ENCODE measurements at regions of chr12 and their contacts with region 1.

Region 1: GRCh38 chr12:57462251-57462911 is 2.8 kb downstream of the GLI1 start:
- DNase-seq: peak; percentile 78 to 93 (median 89)
- ATAC-seq: peak; percentile 64
- H3K4me3 ChIP-seq: peak overlapping the region; percentile 52 to 55
- H3K4me3 Mint-ChIP-seq: peak overlapping the region; percentile 92
- H3K27ac ChIP-seq: no peak overlapping the region
- H3K27ac Mint-ChIP-seq: peak overlapping the region; percentile 81
- H3K4me1 ChIP-seq: peaks cover 20% of the 10 kb centered on the region
- H3K4me1 Mint-ChIP-seq: peaks cover 34% of the 10 kb centered on the region
- H3K27me3 ChIP-seq: peaks cover 0 to 4% of the 10 kb centered on the region in 2 experiments
- H3K27me3 Mint-ChIP-seq: peaks cover 3% of the 10 kb centered on the region
- CTCF ChIP-seq: peak; percentile 92

Region 2: GRCh38 chr12:56243731-56244181 is 1218.6 kb before region 1 on chr12:
- CTCF ChIA-PET with region 1: no interaction called
- POLR2A ChIA-PET with region 1: no interaction called
- intact Hi-C with region 1: no loop called
- DNase-seq: no peak
- ATAC-seq: no peak
- H3K4me3 ChIP-seq: no peak overlapping the region
- H3K4me3 Mint-ChIP-seq: no peak overlapping the region
- H3K27ac ChIP-seq: no peak overlapping the region
- H3K27ac Mint-ChIP-seq: no peak overlapping the region
- H3K4me1 ChIP-seq: no peaks in the 10 kb centered on the region
- H3K4me1 Mint-ChIP-seq: no peaks in the 10 kb centered on the region
- H3K27me3 ChIP-seq: no peaks in the 10 kb centered on the region
- H3K27me3 Mint-ChIP-seq: no peaks in the 10 kb centered on the region
- CTCF ChIP-seq: no peak

Region 3: DNA sequence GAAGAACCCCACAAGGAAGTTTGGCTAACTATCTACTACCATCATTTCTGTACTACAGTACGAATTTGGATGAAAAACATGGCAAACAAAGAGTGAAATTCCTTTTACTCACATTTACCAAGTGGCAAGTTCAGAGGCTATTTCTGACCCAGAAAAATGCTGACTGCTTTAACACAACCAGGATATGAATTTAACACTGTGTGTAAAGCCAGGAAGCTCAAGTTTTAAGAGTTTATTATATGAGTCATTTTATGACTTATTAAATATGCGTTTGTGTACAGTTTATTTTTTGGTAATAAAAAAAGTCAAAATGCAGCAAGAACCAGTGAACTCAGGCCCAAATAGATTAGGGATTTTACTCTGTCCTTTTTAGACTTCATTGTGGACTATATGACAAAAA is 153.0 kb before region 1 on chr12:
- CTCF ChIA-PET with region 1: interaction called, 5 read pairs
- POLR2A ChIA-PET with region 1: no interaction called
- intact Hi-C with region 1: loop called in 1 of 2 experiments (anchors 5 kb)
- DNase-seq: no peak
- ATAC-seq: no peak
- H3K4me3 ChIP-seq: no peak overlapping the region
- H3K4me3 Mint-ChIP-seq: no peak overlapping the region
- H3K27ac ChIP-seq: no peak overlapping the region
- H3K27ac Mint-ChIP-seq: no peak overlapping the region
- H3K4me1 ChIP-seq: no peaks in the 10 kb centered on the region
- H3K4me1 Mint-ChIP-seq: peaks cover 4% of the 10 kb centered on the region
- H3K27me3 ChIP-seq: no peaks in the 10 kb centered on the region
- H3K27me3 Mint-ChIP-seq: no peaks in the 10 kb centered on the region
- CTCF ChIP-seq: no peak

Region 4: DNA sequence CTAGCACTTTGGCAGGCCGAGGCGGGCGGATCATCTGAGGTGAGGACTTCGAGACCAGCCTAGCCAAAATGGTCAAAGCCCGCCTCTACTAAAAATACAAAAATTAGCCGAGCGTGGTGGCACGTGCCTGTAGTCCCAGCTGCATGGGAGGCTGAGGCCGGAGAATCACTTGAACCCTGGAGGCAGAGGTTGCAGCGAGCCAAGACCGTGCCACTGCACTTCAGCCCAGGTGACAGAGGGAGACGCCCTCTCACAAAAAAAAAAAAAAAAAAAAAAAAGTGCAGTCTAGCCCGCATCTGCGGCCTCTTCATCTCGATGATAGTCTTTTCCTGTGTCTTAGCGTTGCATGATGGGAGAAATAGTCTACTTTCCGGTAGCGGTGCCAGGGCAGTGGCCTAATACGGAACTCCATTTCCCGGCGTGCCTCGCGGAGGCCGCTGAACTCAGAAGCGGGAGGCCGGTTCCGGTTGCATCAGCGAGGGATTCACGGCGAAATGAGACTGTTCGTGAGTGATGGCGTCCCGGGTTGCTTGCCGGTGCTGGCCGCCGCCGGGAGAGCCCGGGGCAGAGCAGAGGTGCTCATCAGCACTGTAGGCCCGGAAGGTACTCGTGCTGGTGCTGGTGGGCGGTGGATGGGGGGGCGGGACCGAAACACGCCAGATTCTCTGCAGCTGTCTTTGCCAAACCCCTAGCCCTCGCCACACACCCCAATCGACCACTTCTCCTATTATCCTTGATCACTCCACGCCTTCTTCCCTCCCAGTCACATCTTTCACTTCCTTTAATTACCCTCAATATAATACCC is 25.4 kb after region 1 on chr12 and contains the start of gene MARS1:
- CTCF ChIA-PET with region 1: interaction called, 9 read pairs
- POLR2A ChIA-PET with region 1: no interaction called
- intact Hi-C with region 1: loop called (anchors 1 kb)
- DNase-seq: peak; percentile 78 to 98 (median 92)
- ATAC-seq: peak; percentile 94
- H3K4me3 ChIP-seq: peak within 1 kb of the TSS; percentile 66 to 85
- H3K4me3 Mint-ChIP-seq: peak within 1 kb of the TSS; percentile 93
- H3K27ac ChIP-seq: peak within 1 kb of the TSS; percentile 61 to 85
- H3K27ac Mint-ChIP-seq: peak within 1 kb of the TSS; percentile 94
- H3K4me1 ChIP-seq: peaks cover 19% of the 10 kb centered on the region
- H3K4me1 Mint-ChIP-seq: peaks cover 36% of the 10 kb centered on the region
- H3K27me3 ChIP-seq: no peaks in the 10 kb centered on the region
- H3K27me3 Mint-ChIP-seq: no peaks in the 10 kb centered on the region
- CTCF ChIP-seq: no peak
- total RNA-seq, gene MARS1: 213 to 226 TPM

Region 5: DNA sequence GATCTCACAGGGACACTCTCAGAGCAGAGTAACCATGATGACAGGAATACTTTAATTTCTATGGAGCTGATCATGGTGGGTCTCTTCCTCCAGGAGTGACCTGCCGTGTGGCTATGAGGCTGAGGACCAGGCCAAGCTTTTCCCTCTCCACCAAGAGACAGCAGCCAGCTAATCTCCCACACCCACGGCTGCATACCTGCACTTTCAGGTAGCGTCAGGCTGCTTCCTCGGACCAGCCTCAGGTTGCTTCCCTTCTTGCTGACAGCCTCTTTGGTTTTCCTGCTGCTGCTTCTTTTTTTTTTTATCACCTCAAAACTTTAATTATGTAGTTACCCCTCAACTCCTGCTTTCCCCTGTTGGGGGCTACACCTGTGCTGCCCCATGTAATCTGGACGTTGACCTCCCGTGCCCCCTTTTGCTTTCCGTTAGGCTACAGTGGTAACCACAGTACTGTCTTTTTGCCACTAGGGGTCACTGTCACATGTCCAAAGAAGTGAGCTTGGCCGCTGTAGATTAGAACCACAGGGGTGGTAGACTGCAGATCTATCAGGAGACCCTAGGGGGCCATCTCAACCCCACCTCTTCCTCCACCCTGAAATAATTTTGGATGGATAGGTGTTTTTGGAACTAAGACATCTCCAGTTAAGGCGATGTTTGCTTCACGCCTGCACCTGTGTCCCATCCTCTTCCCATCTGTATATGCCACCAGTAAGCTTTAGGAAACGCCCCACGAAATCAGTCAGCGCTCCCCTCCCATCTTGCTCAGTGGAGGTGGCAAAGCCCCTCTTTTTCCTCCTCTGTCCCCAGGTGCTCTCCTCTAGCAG is 120.8 kb after region 1 on chr12:
- CTCF ChIA-PET with region 1: interaction called, 13 read pairs
- POLR2A ChIA-PET with region 1: no interaction called
- intact Hi-C with region 1: loop called in 1 of 2 experiments (anchors 1 kb)
- DNase-seq: peak; percentile 30 to 90 (median 74)
- ATAC-seq: peak; percentile 100
- H3K4me3 ChIP-seq: no peak overlapping the region
- H3K4me3 Mint-ChIP-seq: no peak overlapping the region
- H3K27ac ChIP-seq: no peak overlapping the region
- H3K27ac Mint-ChIP-seq: no peak overlapping the region
- H3K4me1 ChIP-seq: no peaks in the 10 kb centered on the region
- H3K4me1 Mint-ChIP-seq: peaks cover 2% of the 10 kb centered on the region
- H3K27me3 ChIP-seq: peaks cover 0 to 7% of the 10 kb centered on the region in 2 experiments
- H3K27me3 Mint-ChIP-seq: no peaks in the 10 kb centered on the region
- CTCF ChIP-seq: peak; percentile 95

Region 6: GRCh38 chr12:57744777-57745484 is 282.6 kb after region 1 on chr12 and contains the start of gene TSPAN31:
- CTCF ChIA-PET with region 1: interaction called, 3 read pairs
- POLR2A ChIA-PET with region 1: interaction called, 3 read pairs
- intact Hi-C with region 1: loop called in 1 of 2 experiments (anchors 5 kb)
- DNase-seq: peak; percentile 85 to 99 (median 94)
- ATAC-seq: peak; percentile 82
- H3K4me3 ChIP-seq: peak within 1 kb of the TSS; percentile 62 to 70
- H3K4me3 Mint-ChIP-seq: peak within 1 kb of the TSS; percentile 91
- H3K27ac ChIP-seq: peak within 1 kb of the TSS; percentile 84 to 94
- H3K27ac Mint-ChIP-seq: peak within 1 kb of the TSS; percentile 93
- H3K4me1 ChIP-seq: peaks cover 40% of the 10 kb centered on the region
- H3K4me1 Mint-ChIP-seq: peaks cover 53% of the 10 kb centered on the region
- H3K27me3 ChIP-seq: no peaks in the 10 kb centered on the region
- H3K27me3 Mint-ChIP-seq: no peaks in the 10 kb centered on the region
- CTCF ChIP-seq: no peak
- total RNA-seq, gene TSPAN31: 7.3 to 8.0 TPM